Activated CD4-positive, alpha-beta memory T cell treated with anti-CD3 and anti-CD28 coated beads, Interleukin-2, amount 10 ng/mL, durations not matched to agents 7 days and 5 days (primary cell): ENCODE measurements at regions of chr16 and their contacts with region 1.

Region 1: GRCh38 chr16:70454222-70455034 is at the start of gene FCSK:
- DNase-seq: peak; percentile 68
- H3K4me3 Mint-ChIP-seq: peak within 1 kb of the TSS; percentile 87
- H3K27ac Mint-ChIP-seq: peak within 1 kb of the TSS; percentile 79
- H3K4me1 Mint-ChIP-seq: peaks cover 18% of the 10 kb centered on the region
- H3K27me3 Mint-ChIP-seq: no peaks in the 10 kb centered on the region
- total RNA-seq, gene FCSK: 17.3 to 17.4 TPM

Region 2: GRCh38 chr16:70438969-70439862 is 15.2 kb before region 1 on chr16 and contains the start of gene ST3GAL2:
- CTCF ChIA-PET with region 1: interaction called, 6 read pairs
- POLR2A ChIA-PET with region 1: interaction called, 21 read pairs
- DNase-seq: peak; percentile 96
- H3K4me3 Mint-ChIP-seq: peak within 1 kb of the TSS; percentile 88
- H3K27ac Mint-ChIP-seq: peak within 1 kb of the TSS; percentile 74
- H3K4me1 Mint-ChIP-seq: peaks cover 29% of the 10 kb centered on the region
- H3K27me3 Mint-ChIP-seq: no peaks in the 10 kb centered on the region
- total RNA-seq, gene ST3GAL2: 21.6 to 22.7 TPM